Adrenal gland (tissue), 19 donors: ENCODE measurements at regions of chr1 and their contacts with region 1.

Region 1: DNA sequence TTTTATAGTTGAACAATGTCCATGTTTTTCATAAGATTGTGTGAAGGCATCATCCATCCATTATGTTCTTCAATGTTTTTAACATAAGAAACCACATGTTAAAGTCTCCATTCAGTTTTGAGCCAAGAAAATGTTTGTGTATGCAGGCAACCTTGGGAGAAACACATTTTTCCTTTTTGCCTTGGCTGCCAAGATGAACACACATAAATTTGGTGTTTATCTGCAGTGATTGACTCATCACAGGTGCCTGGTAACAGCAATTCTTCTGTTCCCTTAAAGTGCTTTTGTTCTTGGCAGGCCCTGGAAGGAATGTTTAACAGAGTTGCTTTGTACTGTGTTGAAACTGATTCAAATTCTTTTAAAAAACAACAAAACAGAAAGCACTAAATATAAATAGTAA is 709.9 kb upstream of the ADGRL4 start:
- DNase-seq: peak in 2 of 7 donors; percentile 21
- H3K4me3 ChIP-seq: no peak overlapping the region
- H3K27ac ChIP-seq: no peak overlapping the region
- H3K4me1 ChIP-seq: no peaks in the 10 kb centered on the region
- H3K27me3 ChIP-seq: no peaks in the 10 kb centered on the region
- CTCF ChIP-seq: no peak
- POLR2A ChIP-seq: no peak

Region 2: DNA sequence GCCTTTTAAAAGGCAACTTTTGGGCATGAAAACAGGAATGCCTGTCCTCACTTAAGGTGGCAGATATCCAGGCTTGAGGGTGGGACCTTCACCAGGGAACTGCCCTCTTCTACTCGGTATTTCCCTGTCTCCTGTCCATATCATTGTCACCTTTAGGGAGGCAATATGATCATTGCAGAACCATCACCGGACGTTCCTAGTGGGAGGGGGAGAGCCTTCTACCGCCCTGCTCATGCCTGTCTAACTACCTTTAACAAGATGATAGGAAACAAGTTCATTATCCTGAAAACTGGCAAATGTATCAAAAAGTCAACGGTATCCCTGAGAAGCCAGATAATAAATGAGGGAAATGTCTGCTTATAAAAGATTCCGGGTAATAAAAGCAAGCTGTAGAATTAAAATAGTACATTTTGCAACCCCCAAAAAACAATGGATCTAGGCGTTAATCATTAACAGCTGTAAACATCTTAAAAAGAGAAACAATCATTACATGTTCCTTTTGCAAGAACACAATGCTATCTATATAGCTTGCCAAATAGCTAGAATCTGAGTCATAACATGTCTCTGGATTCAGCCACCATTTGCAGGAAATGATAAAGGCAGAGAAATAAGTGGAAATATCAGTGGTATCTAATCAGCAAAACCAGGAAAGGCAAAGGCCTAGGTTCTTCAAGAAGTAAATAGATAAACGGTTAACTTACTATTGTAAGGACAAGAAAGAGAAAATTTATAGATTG is 142.9 kb after region 1 on chr1:
- intact Hi-C with region 1: loop called in 1 of 2 experiments (anchors 5 kb)
- DNase-seq: no peak
- H3K4me3 ChIP-seq: no peak overlapping the region
- H3K27ac ChIP-seq: no peak overlapping the region
- H3K4me1 ChIP-seq: no peaks in the 10 kb centered on the region
- H3K27me3 ChIP-seq: no peaks in the 10 kb centered on the region
- CTCF ChIP-seq: no peak
- POLR2A ChIP-seq: no peak